ENCODE measurements at regions of chr11 and their contacts with region 1.

Region 1: GRCh38 chr11:71372693-71373657 is 75.2 kb downstream of the DHCR7 start:
- DNase-seq: peak; percentile 50
- ATAC-seq: peak; percentile 89
- H3K4me3 ChIP-seq: no peak overlapping the region
- H3K27ac ChIP-seq: no peak overlapping the region
- H3K4me1 ChIP-seq: no peaks in the 10 kb centered on the region
- H3K27me3 ChIP-seq: peaks cover 25% of the 10 kb centered on the region
- CTCF ChIP-seq: peak; percentile 65
- POLR2A ChIP-seq: no peak
- RAD21 ChIP-seq: peak; percentile 82

Region 2: DNA sequence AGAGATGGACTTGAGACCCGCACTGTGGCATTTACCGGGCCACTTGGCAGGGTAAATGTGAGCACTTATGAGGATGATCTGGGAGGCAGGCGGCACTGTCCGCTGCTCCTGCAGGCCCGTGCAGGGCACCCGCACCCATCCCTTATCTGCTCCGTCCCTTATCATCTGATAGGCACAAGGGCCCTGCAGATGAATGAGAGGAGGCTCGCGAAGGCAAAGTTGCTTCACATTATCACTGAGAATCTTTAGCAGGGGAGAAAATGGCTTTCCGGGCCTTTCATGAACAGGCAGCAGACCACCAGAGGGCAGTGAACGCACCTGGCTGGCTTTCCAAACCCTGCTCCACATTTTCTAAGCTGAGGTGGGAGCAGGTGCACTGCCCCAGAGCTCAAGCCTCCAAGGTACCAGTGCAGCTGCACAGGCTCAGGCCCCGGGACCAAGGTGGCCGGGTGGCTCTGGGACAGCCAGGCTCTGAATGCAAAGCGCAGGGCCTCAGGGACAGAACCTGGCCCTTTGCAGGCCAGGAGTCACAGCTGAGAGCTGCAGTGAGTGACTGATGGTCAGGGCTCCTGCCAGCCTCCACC is 286.2 kb before region 1 on chr11:
- CTCF ChIA-PET with region 1: no interaction called
- POLR2A ChIA-PET with region 1: no interaction called
- dilution Hi-C with region 1: no loop called
- in situ Hi-C with region 1: no loop called
- intact Hi-C with region 1: loop called (anchors 1 kb)
- DNase-seq: peak; percentile 10
- ATAC-seq: peak; percentile 57; the same call in 1 of the 2 replicates
- H3K4me3 ChIP-seq: no peak overlapping the region
- H3K27ac ChIP-seq: no peak overlapping the region
- H3K4me1 ChIP-seq: no peaks in the 10 kb centered on the region
- H3K27me3 ChIP-seq: no peaks in the 10 kb centered on the region
- CTCF ChIP-seq: peak; percentile 49
- POLR2A ChIP-seq: no peak
- RAD21 ChIP-seq: peak; percentile 60